WTC11 (cell line): ENCODE measurements at regions of chrX and their contacts with region 1.

Region 1: DNA sequence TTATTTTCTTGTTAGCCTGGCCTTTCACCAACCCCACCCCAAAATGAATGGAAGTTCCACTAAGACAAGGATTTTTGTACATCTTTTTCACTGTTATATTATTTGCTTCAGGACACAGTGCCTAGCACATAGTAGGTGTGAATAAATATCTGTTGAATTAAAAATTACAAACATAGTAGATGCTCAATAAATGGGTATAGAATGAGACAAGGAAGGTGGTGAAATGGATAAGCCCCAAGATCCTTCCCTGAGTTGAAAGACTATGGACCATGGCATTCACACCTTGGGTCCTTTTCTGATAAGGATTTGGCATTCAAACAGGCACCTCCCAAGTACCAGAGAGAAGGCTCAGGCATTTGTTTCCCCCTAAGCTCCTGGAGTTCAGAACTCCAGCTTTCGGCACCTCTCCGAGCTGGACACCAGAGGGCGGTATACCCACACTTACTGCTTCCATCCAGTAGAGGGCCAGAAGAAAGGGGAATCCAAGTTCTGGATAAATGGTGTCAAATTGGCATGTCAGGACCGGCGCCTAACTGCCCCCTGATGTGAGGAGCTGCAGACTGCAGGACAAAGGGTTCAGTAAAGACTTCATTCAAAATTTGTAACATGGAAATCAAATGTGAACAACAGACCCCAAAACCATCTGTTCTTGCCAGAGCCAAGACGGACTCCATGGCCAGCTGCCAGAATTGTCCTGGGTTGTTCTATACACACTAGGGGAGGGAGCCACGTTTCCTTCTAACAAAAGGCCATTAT is 193.0 kb downstream of the GPC3 start:
- DNase-seq: peak; percentile 73
- ATAC-seq: peak; percentile 83
- H3K4me3 Mint-ChIP-seq: no peak overlapping the region
- H3K27ac Mint-ChIP-seq: no peak overlapping the region
- H3K4me1 Mint-ChIP-seq: peaks cover 20% of the 10 kb centered on the region
- H3K27me3 Mint-ChIP-seq: no peaks in the 10 kb centered on the region
- CTCF ChIP-seq: peak; percentile 86

Region 2: DNA sequence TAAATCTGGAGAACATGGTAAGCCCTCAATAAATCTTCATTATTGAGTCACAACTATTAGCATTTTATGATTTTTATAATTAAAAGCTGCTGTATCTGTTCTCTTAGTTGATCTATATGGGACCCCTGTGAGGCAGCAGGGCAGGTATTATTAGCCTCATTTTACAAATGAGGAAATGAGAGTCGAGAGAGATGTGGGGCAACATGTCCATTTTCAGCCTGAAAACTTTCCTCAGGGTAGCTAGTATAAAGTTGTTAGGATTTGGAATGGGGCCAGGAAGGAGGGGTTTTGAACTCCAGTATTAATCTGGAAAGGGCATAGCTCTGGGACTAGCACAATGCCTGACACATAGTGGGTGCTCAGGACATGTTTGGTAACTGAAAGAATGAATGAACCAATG is 185.4 kb before region 1 on chrX:
- CTCF ChIA-PET with region 1: no interaction called
- POLR2A ChIA-PET with region 1: no interaction called
- DNase-seq: no peak
- ATAC-seq: no peak
- H3K4me3 Mint-ChIP-seq: no peak overlapping the region
- H3K27ac Mint-ChIP-seq: no peak overlapping the region
- H3K4me1 Mint-ChIP-seq: peaks cover 6% of the 10 kb centered on the region
- H3K27me3 Mint-ChIP-seq: no peaks in the 10 kb centered on the region
- CTCF ChIP-seq: no peak

Region 3: GRCh38 chrX:133838761-133839676 is 46.6 kb after region 1 on chrX:
- CTCF ChIA-PET with region 1: interaction called, 19 read pairs
- POLR2A ChIA-PET with region 1: no interaction called
- DNase-seq: peak; percentile 42
- ATAC-seq: peak; percentile 65
- H3K4me3 Mint-ChIP-seq: no peak overlapping the region
- H3K27ac Mint-ChIP-seq: no peak overlapping the region
- H3K4me1 Mint-ChIP-seq: peaks cover 7% of the 10 kb centered on the region; the same call in 1 of the 2 replicates
- H3K27me3 Mint-ChIP-seq: no peaks in the 10 kb centered on the region
- CTCF ChIP-seq: peak; percentile 56

Region 4: DNA sequence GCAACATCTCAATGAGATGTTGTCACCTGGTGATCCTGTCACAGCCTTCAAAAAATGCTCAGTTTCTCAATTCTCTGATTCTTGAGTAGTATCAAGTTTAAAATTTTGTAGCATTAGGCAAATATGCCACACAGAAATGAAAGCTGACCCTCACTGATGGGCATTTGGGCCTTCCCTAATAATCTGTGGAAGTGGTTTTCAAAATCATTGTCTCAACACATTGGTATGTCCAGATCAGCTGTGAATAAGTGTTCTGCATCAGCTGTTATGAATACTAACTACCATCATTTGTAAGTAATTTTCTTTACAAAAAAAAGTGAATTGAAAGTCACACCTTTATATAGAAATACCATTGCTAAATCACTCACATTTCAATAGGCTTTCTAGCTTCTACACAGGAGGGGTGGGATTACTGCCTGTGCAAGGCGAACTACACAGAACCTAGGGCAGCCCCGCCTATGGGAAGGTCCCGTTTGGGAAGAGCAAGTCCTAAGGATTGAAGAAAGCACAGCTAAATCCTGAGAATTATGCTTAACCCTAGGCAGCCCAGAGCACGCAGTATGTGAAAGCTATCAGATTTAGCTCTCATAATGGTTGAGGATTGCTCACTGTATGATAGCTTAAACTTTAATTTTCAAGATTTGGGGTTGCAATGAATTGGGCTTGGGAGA is 119.6 kb after region 1 on chrX:
- CTCF ChIA-PET with region 1: interaction called, 13 read pairs
- POLR2A ChIA-PET with region 1: no interaction called
- DNase-seq: no peak
- ATAC-seq: no peak
- H3K4me3 Mint-ChIP-seq: no peak overlapping the region
- H3K27ac Mint-ChIP-seq: no peak overlapping the region
- H3K4me1 Mint-ChIP-seq: peaks cover 29% of the 10 kb centered on the region
- H3K27me3 Mint-ChIP-seq: no peaks in the 10 kb centered on the region
- CTCF ChIP-seq: no peak

Region 5: DNA sequence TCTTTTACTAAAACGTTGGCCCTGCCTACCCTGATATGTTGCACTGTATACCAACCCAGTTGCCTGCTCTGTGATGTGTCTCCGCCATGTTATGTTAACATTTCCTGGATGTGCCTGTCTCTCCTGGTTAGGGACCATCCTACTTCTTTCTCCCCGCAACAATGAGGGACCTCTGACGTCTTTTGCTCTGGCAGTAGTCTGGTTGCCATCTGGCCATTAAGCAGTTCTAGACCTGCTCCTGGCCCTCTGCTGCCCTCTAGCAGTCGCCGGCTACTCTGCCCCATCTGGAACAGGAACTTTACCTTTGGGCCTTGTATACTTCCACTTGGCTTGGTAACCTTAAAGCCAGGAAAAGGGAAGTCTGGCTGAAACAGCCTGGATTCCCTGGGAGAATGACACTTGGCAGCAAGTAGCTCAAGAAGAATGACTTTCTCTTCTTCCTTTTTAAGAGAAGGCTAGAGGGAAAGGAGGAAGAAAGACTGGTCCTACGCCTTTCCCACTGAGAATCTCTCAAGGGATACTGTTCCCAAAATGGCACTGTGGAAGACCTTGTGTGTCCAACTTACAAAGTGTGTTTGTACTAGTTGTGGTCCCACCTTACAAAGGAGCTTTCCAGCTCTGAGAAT is 129.5 kb after region 1 on chrX:
- CTCF ChIA-PET with region 1: interaction called, 36 read pairs
- POLR2A ChIA-PET with region 1: no interaction called
- DNase-seq: peak; percentile 75
- ATAC-seq: peak; percentile 92
- H3K4me3 Mint-ChIP-seq: no peak overlapping the region
- H3K27ac Mint-ChIP-seq: peak overlapping the region; percentile 76; the same call in 1 of the 2 replicates
- H3K4me1 Mint-ChIP-seq: peaks cover 53% of the 10 kb centered on the region
- H3K27me3 Mint-ChIP-seq: peaks cover 4% of the 10 kb centered on the region; the same call in 1 of the 2 replicates
- CTCF ChIP-seq: peak; percentile 32; the same call in 1 of the 2 replicates

Region 6: GRCh38 chrX:134020910-134021309 is 228.5 kb after region 1 on chrX:
- CTCF ChIA-PET with region 1: interaction called, 78 read pairs
- POLR2A ChIA-PET with region 1: no interaction called
- DNase-seq: no peak
- ATAC-seq: peak; percentile 88
- H3K4me3 Mint-ChIP-seq: no peak overlapping the region
- H3K27ac Mint-ChIP-seq: no peak overlapping the region
- H3K4me1 Mint-ChIP-seq: peaks cover 4% of the 10 kb centered on the region; the same call in 1 of the 2 replicates
- H3K27me3 Mint-ChIP-seq: no peaks in the 10 kb centered on the region
- CTCF ChIP-seq: no peak